Stomach (tissue), 19 donors: ENCODE measurements at regions of chr5 and their contacts with region 1.

Region 1: GRCh38 chr5:137320056-137321045 is 178.8 kb downstream of the SPOCK1 start:
- DNase-seq: peak; percentile 29 to 76
- H3K4me3 ChIP-seq: no peak overlapping the region
- H3K27ac ChIP-seq: no peak overlapping the region
- H3K4me1 ChIP-seq: peaks cover 0 to 7% (median 0%) of the 10 kb centered on the region in 4 donors
- H3K27me3 ChIP-seq: peaks cover 0 to 10% (median 0%) of the 10 kb centered on the region in 3 donors
- CTCF ChIP-seq: peak in 5 of 7 experiments; percentile 5 to 79 (median 75)
- EP300 ChIP-seq: no peak
- POLR2A ChIP-seq: no peak

Region 2: GRCh38 chr5:137498736-137499505 is 178.6 kb after region 1 on chr5 and contains the start of gene SPOCK1:
- intact Hi-C with region 1: loop called (anchors 5 kb)
- DNase-seq: peak; percentile 73 to 93
- H3K4me3 ChIP-seq: peak within 1 kb of the TSS; percentile 40 to 52 (median 47)
- H3K27ac ChIP-seq: peak within 1 kb of the TSS in 1 of 5 donors; percentile 54
- H3K4me1 ChIP-seq: peaks cover 11 to 14% (median 12%) of the 10 kb centered on the region in 4 donors
- H3K27me3 ChIP-seq: peaks cover 8 to 64% (median 18%) of the 10 kb centered on the region in 3 donors
- CTCF ChIP-seq: peak in 3 of 7 experiments; percentile 66 to 85 (median 84)
- EP300 ChIP-seq: no peak
- POLR2A ChIP-seq: no peak
- total RNA-seq, gene SPOCK1: 8.4 to 15.6 (median 10.1) TPM